Activated T-helper 1 cell treated with anti-CD3 and anti-CD28 coated beads, Interleukin-12 subunit alpha, Interleukin-12 subunit beta, Interleukin-2, Interleukin-4 antibody, amounts not matched to agents 30 ng/mL and 10 ng/mL and 1 ng/mL, durations not matched to agents 14 hours and 24 hours and 36 hours (primary cell): ENCODE measurements at regions of chr17 and their contacts with region 1.

Region 1: GRCh38 chr17:35432176-35433074 is at the start of gene SLFN12:
- DNase-seq: peak; percentile 36
- H3K4me3 Mint-ChIP-seq: peak within 1 kb of the TSS; percentile 86
- H3K27ac Mint-ChIP-seq: peak within 1 kb of the TSS; percentile 87
- H3K4me1 Mint-ChIP-seq: peaks cover 51% of the 10 kb centered on the region
- H3K27me3 Mint-ChIP-seq: no peaks in the 10 kb centered on the region
- total RNA-seq, gene SLFN12: 6.6 and 8.4 TPM in 2 replicates

Region 2: DNA sequence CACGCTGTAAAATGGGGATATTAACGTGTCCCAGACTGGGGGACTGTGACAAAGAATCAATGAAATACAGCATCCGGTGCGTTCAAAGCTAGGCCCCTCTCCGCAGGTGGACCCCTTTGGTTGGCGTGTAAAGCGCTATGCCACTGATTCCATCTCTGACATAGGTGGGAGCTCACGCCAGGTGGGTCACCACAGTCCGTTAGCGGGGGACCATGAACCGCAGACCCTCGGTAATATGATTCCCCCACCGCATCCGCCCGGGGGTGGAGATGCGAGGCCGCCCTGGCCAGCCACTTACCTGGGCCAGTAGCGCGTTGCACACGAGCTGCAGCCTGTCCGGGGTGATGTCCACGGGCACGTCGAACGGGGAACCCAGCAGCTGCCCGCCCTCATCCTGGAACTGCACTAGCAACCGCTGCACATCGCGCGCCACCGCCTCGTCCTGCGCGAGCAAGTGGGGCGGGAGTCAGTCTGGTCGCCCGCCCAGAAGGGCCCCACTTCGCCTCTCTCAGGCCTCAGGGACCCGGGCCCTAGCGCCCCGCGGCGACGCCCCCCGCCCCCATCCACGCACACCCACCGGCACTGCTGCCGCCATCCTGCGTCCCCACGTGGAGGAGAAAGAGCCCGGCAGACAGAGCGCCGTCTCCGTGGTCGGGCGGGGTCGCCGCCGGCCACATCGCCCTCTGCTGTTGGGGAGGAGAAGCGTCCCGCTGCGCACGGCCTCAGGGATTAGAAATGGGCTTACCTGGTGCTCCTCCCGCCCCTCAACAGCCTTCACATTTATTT is 290.6 kb before region 1 on chr17 and contains the start of gene NLE1:
- intact Hi-C with region 1: loop called (anchors 10 kb)
- DNase-seq: peak; percentile 85
- H3K4me3 Mint-ChIP-seq: peak within 1 kb of the TSS; percentile 86
- H3K27ac Mint-ChIP-seq: peak within 1 kb of the TSS; percentile 80
- H3K4me1 Mint-ChIP-seq: no peaks in the 10 kb centered on the region
- H3K27me3 Mint-ChIP-seq: no peaks in the 10 kb centered on the region
- total RNA-seq, gene NLE1: 51.1 and 54.4 TPM in 2 replicates

Region 3: DNA sequence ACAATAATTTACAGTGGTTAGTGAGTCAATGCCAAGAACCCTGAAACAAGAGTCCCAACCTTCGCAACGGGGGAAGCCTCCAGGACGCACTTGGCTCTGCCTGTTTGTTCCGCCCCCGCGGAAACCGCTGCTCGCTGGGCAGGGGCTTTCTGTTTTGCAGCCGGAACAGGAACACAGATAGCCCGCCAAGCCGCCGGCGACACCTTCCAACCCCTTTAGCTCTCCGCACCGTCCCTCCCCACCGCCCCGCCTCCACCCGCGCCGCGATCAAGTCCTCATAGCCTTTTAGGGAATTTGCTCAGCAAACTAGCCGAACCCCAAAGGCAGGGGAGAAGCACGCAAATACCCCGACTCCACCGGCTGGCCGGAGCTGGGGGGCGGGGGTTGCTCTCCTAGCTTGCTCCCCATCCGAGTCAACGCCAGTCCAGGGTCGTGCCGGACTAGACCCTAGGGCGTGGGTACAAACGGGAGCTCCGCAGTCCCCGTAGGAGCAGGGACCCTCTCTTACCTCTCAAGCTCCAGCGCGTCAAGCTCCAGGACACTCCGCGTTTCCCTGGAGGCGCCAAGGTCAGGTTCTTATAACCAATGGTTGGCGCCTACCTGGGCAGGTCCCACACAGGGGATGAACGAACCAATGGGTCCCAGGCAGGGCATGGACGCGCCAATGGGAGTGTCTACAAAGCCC is 15.9 kb after region 1 on chr17 and contains the start of gene SLFN13:
- intact Hi-C with region 1: loop called (anchors 1 kb)
- DNase-seq: peak; percentile 84
- H3K4me3 Mint-ChIP-seq: peak within 1 kb of the TSS; percentile 67
- H3K27ac Mint-ChIP-seq: peak within 1 kb of the TSS; percentile 66
- H3K4me1 Mint-ChIP-seq: peaks cover 27% of the 10 kb centered on the region
- H3K27me3 Mint-ChIP-seq: no peaks in the 10 kb centered on the region
- total RNA-seq, gene SLFN13: 32.2 and 32.7 TPM in 2 replicates